Activated CD4-positive, alpha-beta T cell treated with anti-CD3 and anti-CD28 coated beads, Interleukin-2, amount 10 ng/mL, durations not matched to agents 24 days and 14 days (primary cell): ENCODE measurements at regions of chr18 and their contacts with region 1.

Region 1: DNA sequence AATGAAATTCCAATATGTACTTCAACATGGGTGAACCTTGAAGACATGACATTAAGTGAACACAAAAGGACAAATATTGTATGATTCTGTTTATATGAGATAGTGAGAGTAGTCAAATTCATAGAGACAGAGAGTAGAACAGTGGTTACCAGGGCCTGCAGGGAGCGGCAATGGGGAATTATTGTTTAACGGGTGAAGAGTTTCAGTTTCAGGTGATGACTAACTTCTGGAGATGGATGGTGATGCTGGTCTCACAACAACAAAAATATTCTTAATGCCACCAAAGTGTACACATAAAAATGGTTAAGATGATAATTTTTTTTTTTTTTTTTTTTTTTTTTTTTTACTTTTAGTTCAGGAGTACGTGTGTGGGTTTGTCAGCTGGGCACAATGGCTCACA is 109.4 kb upstream of the TMEM200C start:
- DNase-seq: peak; percentile 73
- H3K4me3 Mint-ChIP-seq: no peak overlapping the region
- H3K27ac Mint-ChIP-seq: peak overlapping the region; percentile 76
- H3K4me1 Mint-ChIP-seq: peaks cover 14% of the 10 kb centered on the region
- H3K27me3 Mint-ChIP-seq: peaks cover 7% of the 10 kb centered on the region

Region 2: GRCh38 chr18:4068552-4069158 is 1936.0 kb before region 1 on chr18:
- intact Hi-C with region 1: no loop called
- DNase-seq: peak; percentile 79
- H3K4me3 Mint-ChIP-seq: no peak overlapping the region
- H3K27ac Mint-ChIP-seq: no peak overlapping the region
- H3K4me1 Mint-ChIP-seq: no peaks in the 10 kb centered on the region
- H3K27me3 Mint-ChIP-seq: no peaks in the 10 kb centered on the region

Region 3: GRCh38 chr18:5975111-5976002 is 29.3 kb before region 1 on chr18:
- intact Hi-C with region 1: loop called (anchors 1 kb)
- DNase-seq: no peak
- H3K4me3 Mint-ChIP-seq: no peak overlapping the region
- H3K27ac Mint-ChIP-seq: no peak overlapping the region
- H3K4me1 Mint-ChIP-seq: peaks cover 11% of the 10 kb centered on the region
- H3K27me3 Mint-ChIP-seq: peaks cover 4% of the 10 kb centered on the region

Region 4: DNA sequence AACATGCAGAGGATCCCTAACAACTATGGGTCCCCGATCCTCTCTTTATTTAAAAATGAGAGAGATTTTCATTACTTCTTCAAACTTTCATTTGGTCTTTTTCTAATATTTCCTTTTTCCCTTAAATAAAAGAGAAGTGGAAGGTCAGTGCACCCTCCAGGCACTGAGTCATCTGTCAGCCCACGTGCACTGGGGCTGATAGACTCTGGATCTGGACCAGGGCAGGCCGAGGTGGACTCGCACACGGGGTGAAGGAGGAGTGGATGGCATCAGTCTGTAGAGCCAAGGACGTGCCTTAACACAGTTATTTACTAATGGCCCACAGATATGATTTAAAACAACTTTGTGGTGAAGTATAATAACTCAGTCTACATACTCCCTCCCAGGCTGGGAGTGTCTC is 105.1 kb after region 1 on chr18:
- intact Hi-C with region 1: no loop called
- DNase-seq: no peak
- H3K4me3 Mint-ChIP-seq: no peak overlapping the region
- H3K27ac Mint-ChIP-seq: no peak overlapping the region
- H3K4me1 Mint-ChIP-seq: no peaks in the 10 kb centered on the region
- H3K27me3 Mint-ChIP-seq: no peaks in the 10 kb centered on the region